GM12878 (cell line): ENCODE measurements at regions of chr14 and their contacts with region 1.

Region 1: GRCh38 chr14:50736932-50737419 is 68.9 kb upstream of the SAV1 start:
- DNase-seq: peak; percentile 79
- ATAC-seq: peak; percentile 89
- H3K4me3 ChIP-seq: no peak overlapping the region
- H3K27ac ChIP-seq: peak overlapping the region; percentile 62
- H3K4me1 ChIP-seq: peaks cover 35% of the 10 kb centered on the region
- H3K27me3 ChIP-seq: no peaks in the 10 kb centered on the region
- CTCF ChIP-seq: no peak
- EP300 ChIP-seq: peak; percentile 66 to 78; a peak in 3 of 4 replicates
- POLR2A ChIP-seq: peak; percentile 46
- RAD21 ChIP-seq: 0 out of 2 replicates have a peak, but pooled peaks have one; percentile 11

Region 2: GRCh38 chr14:50501642-50502041 is 235.3 kb before region 1 on chr14:
- CTCF ChIA-PET with region 1: no interaction called
- POLR2A ChIA-PET with region 1: no interaction called
- RAD21 ChIA-PET with region 1: no interaction called
- SMC1A ChIA-PET with region 1: no interaction called
- in situ Hi-C with region 1: no loop called
- intact Hi-C with region 1: no loop called
- DNase-seq: no peak
- ATAC-seq: no peak
- H3K4me3 ChIP-seq: no peak overlapping the region
- H3K27ac ChIP-seq: no peak overlapping the region
- H3K4me1 ChIP-seq: no peaks in the 10 kb centered on the region
- H3K27me3 ChIP-seq: no peaks in the 10 kb centered on the region
- CTCF ChIP-seq: no peak
- EP300 ChIP-seq: no peak
- POLR2A ChIP-seq: no peak
- RAD21 ChIP-seq: no peak

Region 3: GRCh38 chr14:50554431-50554996 is 182.5 kb before region 1 on chr14:
- CTCF ChIA-PET with region 1: no interaction called
- POLR2A ChIA-PET with region 1: no interaction called
- RAD21 ChIA-PET with region 1: no interaction called
- SMC1A ChIA-PET with region 1: no interaction called
- in situ Hi-C with region 1: no loop called
- intact Hi-C with region 1: no loop called
- DNase-seq: no peak
- ATAC-seq: no peak
- H3K4me3 ChIP-seq: no peak overlapping the region
- H3K27ac ChIP-seq: no peak overlapping the region
- H3K4me1 ChIP-seq: no peaks in the 10 kb centered on the region
- H3K27me3 ChIP-seq: no peaks in the 10 kb centered on the region; a peak in 1 of 4 replicates
- CTCF ChIP-seq: no peak
- EP300 ChIP-seq: no peak
- POLR2A ChIP-seq: no peak
- RAD21 ChIP-seq: no peak

Region 4: GRCh38 chr14:50667996-50668825 is 68.8 kb before region 1 on chr14 and contains the start of gene SAV1:
- CTCF ChIA-PET with region 1: interaction called, 3 read pairs
- POLR2A ChIA-PET with region 1: no interaction called
- RAD21 ChIA-PET with region 1: interaction called, 7 read pairs
- SMC1A ChIA-PET with region 1: interaction called, 11 read pairs
- in situ Hi-C with region 1: no loop called
- intact Hi-C with region 1: no loop called
- DNase-seq: no peak
- ATAC-seq: peak; percentile 78
- H3K4me3 ChIP-seq: peak within 1 kb of the TSS; percentile 90
- H3K27ac ChIP-seq: peak within 1 kb of the TSS; percentile 30
- H3K4me1 ChIP-seq: no peaks in the 10 kb centered on the region
- H3K27me3 ChIP-seq: no peaks in the 10 kb centered on the region
- CTCF ChIP-seq: no peak
- EP300 ChIP-seq: no peak
- POLR2A ChIP-seq: peak; percentile 84
- RAD21 ChIP-seq: peak; percentile 11; the same call in 1 of the 2 replicates
- polyA plus RNA-seq, gene SAV1: 10.1 to 15.1 TPM

Region 5: DNA sequence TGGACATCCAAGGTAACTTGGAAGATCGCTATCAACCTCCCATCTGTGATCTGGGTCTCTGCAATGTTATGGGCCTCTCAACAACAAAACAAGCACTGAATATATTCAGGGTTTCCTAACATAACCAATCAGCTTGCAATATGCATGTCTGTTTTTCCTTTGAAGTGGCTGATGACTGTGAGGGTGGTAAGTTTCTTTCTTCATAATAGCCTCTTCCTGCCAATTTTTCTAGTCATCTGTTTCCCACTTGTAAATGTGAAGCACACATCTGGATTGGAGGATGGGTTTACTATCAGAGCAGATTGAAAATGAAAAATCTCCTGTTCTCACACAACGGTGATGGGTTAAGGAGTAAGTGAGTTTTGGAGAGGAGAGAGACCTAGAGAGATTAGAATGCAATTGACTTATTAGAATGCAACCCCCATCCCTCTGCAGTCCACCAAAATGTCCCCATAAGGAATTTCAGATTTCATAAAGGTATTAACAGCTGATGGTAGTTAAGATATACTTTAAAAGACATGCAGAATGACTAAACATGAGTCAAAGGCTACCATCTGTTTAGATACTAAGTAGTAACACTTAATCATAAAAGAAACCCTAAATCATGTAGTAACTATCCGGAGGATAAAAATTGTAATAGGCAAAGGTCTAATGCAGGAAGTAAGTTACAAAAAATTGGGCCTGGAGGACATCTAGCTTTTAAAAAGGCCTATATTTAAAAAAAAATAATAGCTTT is 10.4 kb before region 1 on chr14:
- CTCF ChIA-PET with region 1: interaction called, 11 read pairs
- POLR2A ChIA-PET with region 1: interaction called, 3 read pairs
- RAD21 ChIA-PET with region 1: interaction called, 6 read pairs
- SMC1A ChIA-PET with region 1: interaction called, 24 read pairs
- in situ Hi-C with region 1: no loop called
- intact Hi-C with region 1: no loop called
- DNase-seq: no peak
- ATAC-seq: no peak
- H3K4me3 ChIP-seq: no peak overlapping the region
- H3K27ac ChIP-seq: no peak overlapping the region
- H3K4me1 ChIP-seq: no peaks in the 10 kb centered on the region
- H3K27me3 ChIP-seq: no peaks in the 10 kb centered on the region
- CTCF ChIP-seq: no peak
- EP300 ChIP-seq: no peak
- POLR2A ChIP-seq: no peak
- RAD21 ChIP-seq: 0 out of 2 replicates have a peak, but pooled peaks have one; percentile 0

Region 6: DNA sequence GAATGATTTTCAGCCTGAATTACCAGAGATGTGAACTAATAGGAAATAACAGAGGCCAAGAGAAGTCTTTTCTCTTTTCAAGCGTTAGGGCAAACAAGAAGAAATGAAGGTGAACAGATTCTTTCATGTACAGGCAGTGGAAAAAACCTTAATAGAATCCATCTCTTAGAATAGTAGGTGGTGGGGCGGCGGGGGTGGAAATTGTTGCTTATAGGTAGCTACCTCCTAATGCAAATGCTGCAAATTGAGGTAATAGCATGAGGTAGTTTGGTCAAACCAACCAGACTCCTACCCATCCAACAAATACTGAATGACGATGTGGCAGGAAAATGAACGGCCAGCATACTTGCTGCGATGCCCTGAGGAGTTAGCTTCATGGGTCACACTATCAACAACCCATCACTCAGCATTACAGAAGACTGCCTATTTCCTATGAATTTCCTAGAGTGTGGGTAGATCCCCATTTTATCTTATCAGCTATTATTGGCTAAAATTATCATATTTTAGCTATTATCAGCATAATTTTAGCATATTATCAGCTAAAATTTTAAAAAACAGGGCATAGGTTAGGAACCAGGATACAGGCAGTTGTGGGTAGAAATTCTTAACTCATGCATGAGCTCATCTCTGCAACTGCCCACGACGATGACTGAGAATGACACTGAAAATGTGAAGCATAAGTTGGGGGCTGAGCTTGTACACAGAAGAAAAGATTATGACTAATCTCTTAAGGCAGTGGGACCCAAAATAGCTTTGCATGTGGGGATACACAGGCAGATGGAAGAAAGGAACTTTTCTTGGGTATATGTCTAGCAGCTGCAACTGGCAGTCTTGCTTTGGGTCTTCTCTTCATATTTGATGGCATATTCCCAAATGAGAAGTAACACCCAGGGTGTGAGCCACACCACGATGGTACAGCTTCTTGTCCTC is 25.3 kb after region 1 on chr14:
- CTCF ChIA-PET with region 1: interaction called, 7 read pairs
- POLR2A ChIA-PET with region 1: interaction called, 15 read pairs
- RAD21 ChIA-PET with region 1: interaction called, 27 read pairs
- SMC1A ChIA-PET with region 1: interaction called, 40 read pairs
- in situ Hi-C with region 1: no loop called
- intact Hi-C with region 1: no loop called
- DNase-seq: no peak
- ATAC-seq: peak; percentile 88
- H3K4me3 ChIP-seq: no peak overlapping the region
- H3K27ac ChIP-seq: peak overlapping the region; percentile 65
- H3K4me1 ChIP-seq: peaks cover 15% of the 10 kb centered on the region; the same call in 1 of the 2 replicates
- H3K27me3 ChIP-seq: no peaks in the 10 kb centered on the region
- CTCF ChIP-seq: no peak
- EP300 ChIP-seq: peak; percentile 12 to 22; a peak in 1 of 4 replicates
- POLR2A ChIP-seq: no peak
- RAD21 ChIP-seq: no peak

Region 7: GRCh38 chr14:50804181-50804721 is 67.3 kb after region 1 on chr14:
- CTCF ChIA-PET with region 1: no interaction called
- POLR2A ChIA-PET with region 1: no interaction called
- RAD21 ChIA-PET with region 1: no interaction called
- SMC1A ChIA-PET with region 1: no interaction called
- in situ Hi-C with region 1: no loop called
- intact Hi-C with region 1: no loop called
- DNase-seq: no peak
- ATAC-seq: no peak
- H3K4me3 ChIP-seq: no peak overlapping the region
- H3K27ac ChIP-seq: no peak overlapping the region
- H3K4me1 ChIP-seq: no peaks in the 10 kb centered on the region
- H3K27me3 ChIP-seq: no peaks in the 10 kb centered on the region
- CTCF ChIP-seq: no peak
- EP300 ChIP-seq: no peak
- POLR2A ChIP-seq: no peak
- RAD21 ChIP-seq: no peak

Region 8: GRCh38 chr14:50830932-50831725 is 94.2 kb after region 1 on chr14 and contains the start of gene NIN:
- CTCF ChIA-PET with region 1: interaction called, 4 read pairs
- POLR2A ChIA-PET with region 1: interaction called, 10 read pairs
- RAD21 ChIA-PET with region 1: interaction called, 4 read pairs
- SMC1A ChIA-PET with region 1: interaction called, 6 read pairs
- in situ Hi-C with region 1: no loop called
- intact Hi-C with region 1: no loop called
- DNase-seq: no peak
- ATAC-seq: peak; percentile 89
- H3K4me3 ChIP-seq: peak within 1 kb of the TSS; percentile 96
- H3K27ac ChIP-seq: peak within 1 kb of the TSS; percentile 87
- H3K4me1 ChIP-seq: peaks cover 26% of the 10 kb centered on the region
- H3K27me3 ChIP-seq: no peaks in the 10 kb centered on the region
- CTCF ChIP-seq: no peak
- EP300 ChIP-seq: no peak
- POLR2A ChIP-seq: peak; percentile 72
- RAD21 ChIP-seq: no peak
- polyA plus RNA-seq, gene NIN: 16.2 to 17.0 TPM